CD4-positive, alpha-beta memory T cell (primary cell): ENCODE measurements at regions of chr12 and their contacts with region 1.

Region 1: DNA sequence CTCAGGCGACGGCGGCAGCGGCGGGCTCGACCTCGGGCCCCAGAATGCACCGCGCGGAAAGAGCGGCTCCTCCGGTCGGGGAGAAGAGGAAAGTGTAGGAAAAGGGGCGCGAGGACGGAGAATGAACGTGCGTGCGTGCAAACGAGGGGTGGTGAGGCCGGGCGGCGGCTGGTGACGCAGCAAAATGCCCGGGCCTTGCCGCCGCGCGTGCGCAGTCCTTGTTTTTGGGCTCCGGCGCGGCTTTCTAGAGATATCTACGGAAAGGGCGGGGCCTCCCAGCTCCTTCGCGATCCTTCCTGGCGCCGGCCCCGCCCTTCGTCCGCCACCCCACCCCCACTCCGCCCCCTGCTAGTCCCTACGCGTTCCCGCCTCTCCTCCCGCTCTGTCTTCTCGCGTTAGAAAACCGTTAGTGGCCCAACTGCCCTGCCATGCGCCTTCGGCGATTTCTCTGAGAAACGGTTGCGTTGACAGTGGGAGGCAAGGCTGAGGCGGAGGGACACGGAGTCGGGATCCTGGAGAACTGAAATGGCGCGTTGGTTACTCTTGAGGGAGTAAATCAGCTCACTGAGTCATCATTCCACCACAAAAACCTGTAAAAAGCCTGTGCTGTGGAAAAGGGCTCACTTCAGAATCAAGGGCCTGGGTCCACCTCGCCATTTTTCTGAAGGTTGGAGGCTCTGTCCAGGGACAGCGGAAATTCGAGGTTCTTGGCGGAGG is at the start of gene PTGES3:
- DNase-seq: peak; percentile 97 to 98 (median 98)
- H3K4me3 ChIP-seq: peak within 1 kb of the TSS; percentile 83 to 99
- H3K4me3 Mint-ChIP-seq: peak within 1 kb of the TSS; percentile 99 to 100 (median 100)
- H3K27ac ChIP-seq: peak within 1 kb of the TSS; percentile 99
- H3K27ac Mint-ChIP-seq: peak within 1 kb of the TSS; percentile 96 to 100 (median 100)
- H3K4me1 ChIP-seq: peaks cover 36% of the 10 kb centered on the region
- H3K4me1 Mint-ChIP-seq: peaks cover 16 to 51% (median 25%) of the 10 kb centered on the region in 4 donors
- H3K27me3 ChIP-seq: no peaks in the 10 kb centered on the region
- H3K27me3 Mint-ChIP-seq: no peaks in the 10 kb centered on the region
- total RNA-seq, gene PTGES3: 191 to 195 TPM

Region 2: DNA sequence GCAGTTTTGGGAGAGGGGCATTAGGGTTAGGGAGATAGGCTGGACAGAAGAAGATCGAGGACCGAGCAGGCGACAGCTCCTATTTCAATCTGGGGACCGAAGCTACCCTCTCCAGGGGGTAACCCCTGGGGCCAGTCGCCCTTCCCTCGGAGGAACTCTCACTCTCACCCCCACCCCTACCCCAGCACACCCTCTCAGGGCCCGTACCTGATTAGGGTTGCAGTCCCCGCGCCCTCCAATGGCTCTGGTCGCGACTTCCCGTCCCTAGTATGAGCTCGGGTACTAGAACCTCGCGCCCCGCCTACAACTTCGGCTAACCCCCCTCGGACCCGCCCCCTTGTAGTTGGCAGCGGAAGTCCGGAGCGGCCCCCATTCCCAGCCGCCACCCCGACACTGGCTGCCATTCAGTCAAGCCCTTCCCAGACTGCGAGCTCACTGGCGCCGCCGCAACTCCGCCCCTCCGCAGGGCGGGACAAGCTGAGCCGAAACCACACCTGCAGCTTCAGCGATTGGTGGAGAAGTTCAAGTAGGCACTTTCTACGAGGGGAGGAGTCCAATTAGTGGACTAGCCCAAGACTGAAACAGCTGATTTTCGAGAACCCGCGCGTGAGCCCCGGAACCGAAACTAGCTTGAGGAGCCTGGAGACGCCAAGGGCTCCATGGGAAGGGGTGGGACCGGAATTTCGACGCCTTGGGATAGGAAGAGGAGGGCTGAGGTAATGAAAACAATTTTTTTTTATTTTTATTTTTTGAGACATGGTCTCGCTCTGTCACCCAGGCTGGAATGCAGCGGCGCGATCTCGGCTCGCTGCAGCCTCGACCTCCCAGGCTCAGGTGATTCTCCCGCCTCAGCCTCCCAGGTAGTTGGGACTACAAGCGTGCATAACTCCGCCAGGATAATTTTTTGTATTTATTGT is 328.2 kb before region 1 on chr12 and contains the start of gene STAT2:
- CTCF ChIA-PET with region 1: no interaction called
- POLR2A ChIA-PET with region 1: interaction called, 3 read pairs
- intact Hi-C with region 1: loop called (anchors 2 kb)
- DNase-seq: peak; percentile 99 to 100 (median 100)
- H3K4me3 ChIP-seq: peak within 1 kb of the TSS; percentile 78 to 97
- H3K4me3 Mint-ChIP-seq: peak within 1 kb of the TSS; percentile 92 to 98 (median 96)
- H3K27ac ChIP-seq: peak within 1 kb of the TSS; percentile 84
- H3K27ac Mint-ChIP-seq: peak within 1 kb of the TSS; percentile 89 to 98 (median 96)
- H3K4me1 ChIP-seq: peaks cover 29% of the 10 kb centered on the region
- H3K4me1 Mint-ChIP-seq: peaks cover 16 to 30% (median 21%) of the 10 kb centered on the region in 4 donors
- H3K27me3 ChIP-seq: no peaks in the 10 kb centered on the region
- H3K27me3 Mint-ChIP-seq: no peaks in the 10 kb centered on the region
- total RNA-seq, gene STAT2: 192 to 193 TPM

Region 3: GRCh38 chr12:56645717-56646446 is 42.4 kb before region 1 on chr12 and contains the start of gene ATP5F1B:
- CTCF ChIA-PET with region 1: interaction called, 12 read pairs
- POLR2A ChIA-PET with region 1: interaction called, 112 read pairs
- intact Hi-C with region 1: loop called (anchors 1 kb)
- DNase-seq: peak; percentile 91 to 97 (median 96)
- H3K4me3 ChIP-seq: peak within 1 kb of the TSS; percentile 95 to 99
- H3K4me3 Mint-ChIP-seq: peak within 1 kb of the TSS; percentile 68 to 99 (median 97)
- H3K27ac ChIP-seq: peak within 1 kb of the TSS; percentile 91
- H3K27ac Mint-ChIP-seq: peak within 1 kb of the TSS; percentile 78 to 99 (median 98)
- H3K4me1 ChIP-seq: peaks cover 33% of the 10 kb centered on the region
- H3K4me1 Mint-ChIP-seq: peaks cover 18 to 43% (median 30%) of the 10 kb centered on the region in 4 donors
- H3K27me3 ChIP-seq: no peaks in the 10 kb centered on the region
- H3K27me3 Mint-ChIP-seq: no peaks in the 10 kb centered on the region
- total RNA-seq, gene ATP5F1B: 243 to 256 TPM

Region 4: GRCh38 chr12:56677680-56678079 is 10.6 kb before region 1 on chr12:
- CTCF ChIA-PET with region 1: interaction called, 7 read pairs
- POLR2A ChIA-PET with region 1: interaction called, 29 read pairs
- intact Hi-C with region 1: no loop called
- DNase-seq: no peak
- H3K4me3 ChIP-seq: no peak overlapping the region
- H3K4me3 Mint-ChIP-seq: peak overlapping the region in 4 of 8 donors; percentile 2 to 44 (median 30)
- H3K27ac ChIP-seq: no peak overlapping the region
- H3K27ac Mint-ChIP-seq: peak overlapping the region in 5 of 7 donors; percentile 51 to 77 (median 53)
- H3K4me1 ChIP-seq: peaks cover 93% of the 10 kb centered on the region
- H3K4me1 Mint-ChIP-seq: peaks cover 40 to 86% (median 62%) of the 10 kb centered on the region in 4 donors
- H3K27me3 ChIP-seq: no peaks in the 10 kb centered on the region
- H3K27me3 Mint-ChIP-seq: no peaks in the 10 kb centered on the region

Region 5: DNA sequence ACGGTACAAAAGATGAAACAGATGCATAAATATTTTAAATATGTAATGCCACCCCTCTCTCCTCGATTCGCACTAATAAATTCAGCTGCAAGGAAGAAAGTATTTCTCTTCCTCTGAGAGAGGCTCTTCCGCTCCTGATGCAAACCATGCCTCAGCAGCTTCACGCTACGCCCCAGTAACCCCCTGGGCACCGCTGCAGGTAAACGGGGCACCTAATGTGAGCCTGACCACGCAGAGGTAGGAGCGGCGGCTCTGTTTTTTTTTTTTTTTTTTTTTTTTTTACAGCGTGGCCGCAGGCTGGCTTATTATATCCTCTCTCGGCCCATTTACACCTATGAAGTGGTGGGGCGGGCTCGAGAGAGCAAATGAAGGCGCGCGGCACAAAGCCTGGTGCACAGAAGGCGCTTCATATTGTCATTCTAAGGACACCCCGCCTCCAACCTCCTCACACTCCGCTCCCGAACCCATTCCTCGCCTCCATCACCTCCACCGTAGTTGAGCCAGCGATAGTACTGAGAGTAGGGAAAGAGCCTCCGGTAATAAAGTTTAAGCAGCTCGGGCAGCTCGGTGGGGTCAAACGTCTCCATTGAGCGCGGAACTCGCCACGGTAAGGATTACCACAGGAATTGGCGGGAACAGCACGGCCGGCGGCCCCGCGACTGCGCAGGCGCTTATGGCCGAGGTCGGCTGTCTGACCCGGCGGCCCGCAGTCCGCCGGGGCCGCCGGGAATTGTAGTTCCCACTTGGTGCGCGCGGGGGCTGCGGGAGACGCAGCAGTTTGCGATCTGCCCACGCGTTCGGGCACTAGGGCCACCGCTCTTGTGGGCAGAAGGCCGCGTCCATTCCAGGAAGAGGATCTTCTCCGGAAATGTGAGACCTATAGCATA is 63.7 kb after region 1 on chr12 and contains the start of gene PRIM1:
- CTCF ChIA-PET with region 1: no interaction called
- POLR2A ChIA-PET with region 1: interaction called, 12 read pairs
- intact Hi-C with region 1: loop called (anchors 1 kb)
- DNase-seq: peak; percentile 80 to 83 (median 82)
- H3K4me3 ChIP-seq: peak within 1 kb of the TSS; percentile 80 to 92
- H3K4me3 Mint-ChIP-seq: peak within 1 kb of the TSS; percentile 96 to 99 (median 98)
- H3K27ac ChIP-seq: peak within 1 kb of the TSS; percentile 82
- H3K27ac Mint-ChIP-seq: peak within 1 kb of the TSS; percentile 94 to 98 (median 96)
- H3K4me1 ChIP-seq: peaks cover 10% of the 10 kb centered on the region
- H3K4me1 Mint-ChIP-seq: peaks cover 20 to 43% (median 28%) of the 10 kb centered on the region in 4 donors
- H3K27me3 ChIP-seq: no peaks in the 10 kb centered on the region
- H3K27me3 Mint-ChIP-seq: no peaks in the 10 kb centered on the region
- total RNA-seq, gene PRIM1: 30.2 to 34.3 TPM

Region 6: GRCh38 chr12:56803750-56804149 is 115.5 kb after region 1 on chr12:
- CTCF ChIA-PET with region 1: no interaction called
- POLR2A ChIA-PET with region 1: no interaction called
- intact Hi-C with region 1: no loop called
- DNase-seq: no peak
- H3K4me3 ChIP-seq: no peak overlapping the region
- H3K4me3 Mint-ChIP-seq: no peak overlapping the region
- H3K27ac ChIP-seq: no peak overlapping the region
- H3K27ac Mint-ChIP-seq: no peak overlapping the region
- H3K4me1 ChIP-seq: no peaks in the 10 kb centered on the region
- H3K4me1 Mint-ChIP-seq: no peaks in the 10 kb centered on the region
- H3K27me3 ChIP-seq: no peaks in the 10 kb centered on the region
- H3K27me3 Mint-ChIP-seq: peaks cover 0 to 2% of the 10 kb centered on the region in 2 donors